Dendritic cell treated with granulocyte-macrophage colony-stimulating factor and Interleukin-4, amounts not matched to agents 40 ng/mL and 50 ng/mL, for 4 days (primary cell): ENCODE measurements at regions of chr6 and their contacts with region 1.

Region 1: DNA sequence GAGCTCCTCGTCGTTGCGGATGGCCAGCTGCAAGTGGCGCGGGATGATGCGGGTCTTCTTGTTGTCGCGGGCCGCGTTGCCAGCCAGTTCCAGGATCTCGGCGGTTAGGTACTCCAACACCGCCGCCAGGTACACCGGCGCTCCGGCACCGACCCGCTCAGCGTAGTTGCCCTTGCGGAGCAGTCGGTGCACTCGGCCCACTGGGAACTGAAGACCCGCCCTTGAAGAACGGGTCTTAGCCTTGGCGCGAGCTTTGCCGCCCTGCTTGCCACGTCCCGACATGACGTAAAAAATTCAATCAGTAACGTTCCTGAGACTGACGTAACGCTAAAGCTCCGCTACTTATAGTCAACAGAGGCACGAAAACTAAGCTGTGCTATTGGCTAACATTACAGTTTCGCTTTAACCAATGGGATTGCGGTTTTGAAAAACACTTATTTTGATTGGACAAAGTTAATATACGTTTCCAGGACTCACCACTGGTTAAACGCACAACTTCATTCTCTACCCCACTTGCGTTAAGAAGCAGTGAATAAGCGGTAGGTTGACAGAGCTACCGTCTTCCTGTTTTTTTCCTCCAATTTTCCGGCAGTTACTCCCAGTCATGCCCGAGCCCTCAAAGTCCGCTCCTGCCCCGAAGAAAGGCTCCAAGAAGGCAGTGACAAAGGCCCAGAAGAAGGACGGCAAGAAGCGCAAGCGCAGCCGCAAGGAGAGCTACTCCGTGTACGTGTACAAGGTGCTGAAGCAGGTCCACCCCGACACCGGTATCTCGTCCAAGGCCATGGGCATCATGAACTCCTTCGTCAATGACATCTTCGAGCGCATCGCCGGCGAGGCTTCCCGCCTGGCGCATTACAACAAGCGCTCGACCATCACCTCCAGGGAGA is 73.9 kb downstream of the OR2B2 start:
- H3K4me3 Mint-ChIP-seq: no peak overlapping the region
- H3K27ac Mint-ChIP-seq: no peak overlapping the region
- H3K4me1 Mint-ChIP-seq: peaks cover 12% of the 10 kb centered on the region
- H3K27me3 Mint-ChIP-seq: no peaks in the 10 kb centered on the region

Region 2: GRCh38 chr6:27650620-27651370 is 187.5 kb before region 1 on chr6:
- intact Hi-C with region 1: no loop called
- H3K4me3 Mint-ChIP-seq: no peak overlapping the region
- H3K27ac Mint-ChIP-seq: no peak overlapping the region
- H3K4me1 Mint-ChIP-seq: no peaks in the 10 kb centered on the region
- H3K27me3 Mint-ChIP-seq: peaks cover 58% of the 10 kb centered on the region

Region 3: DNA sequence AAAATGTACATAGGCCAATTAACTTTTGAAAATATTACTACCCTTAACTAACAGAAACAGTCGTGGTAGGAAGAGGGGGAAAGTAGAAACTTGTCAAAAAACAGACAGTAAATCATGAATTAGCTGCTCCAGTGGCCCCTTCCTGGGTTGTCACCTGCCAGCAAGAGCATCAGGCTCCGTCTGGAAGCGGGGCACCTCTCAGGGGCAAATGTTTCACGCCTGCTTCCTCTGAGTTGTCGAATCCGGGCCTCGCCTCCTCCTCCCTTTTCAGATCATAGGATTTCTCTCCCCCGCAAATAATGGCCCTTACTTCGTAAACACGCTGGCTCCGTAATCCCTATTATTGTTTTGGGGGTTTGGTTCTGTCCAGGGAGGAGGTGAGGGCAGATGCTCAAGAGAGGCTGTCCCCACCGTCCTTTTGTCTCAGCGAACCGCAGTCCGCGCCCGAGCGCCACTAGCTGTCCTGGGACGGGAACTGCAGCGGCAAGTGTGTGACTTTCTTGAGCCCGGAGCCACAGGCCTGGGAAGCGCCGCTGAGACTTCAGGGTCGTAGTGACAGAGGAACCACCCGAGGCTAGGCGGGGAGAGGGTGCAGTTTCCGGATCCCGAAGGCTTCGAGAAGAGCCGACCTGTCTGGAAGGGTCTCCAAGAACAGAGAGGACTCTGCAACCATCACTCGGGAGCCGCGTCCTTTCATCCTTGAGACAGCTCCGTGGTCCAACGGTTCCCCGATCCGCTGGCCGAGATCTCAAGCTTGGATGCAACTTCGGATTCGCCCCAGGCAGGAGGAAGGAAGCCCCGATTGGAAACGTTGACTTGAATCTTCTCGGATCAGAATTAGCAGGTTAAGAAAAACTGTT is 150.9 kb before region 1 on chr6:
- intact Hi-C with region 1: no loop called
- H3K4me3 Mint-ChIP-seq: peak overlapping the region; percentile 78
- H3K27ac Mint-ChIP-seq: no peak overlapping the region
- H3K4me1 Mint-ChIP-seq: peaks cover 11% of the 10 kb centered on the region
- H3K27me3 Mint-ChIP-seq: peaks cover 65% of the 10 kb centered on the region

Region 4: DNA sequence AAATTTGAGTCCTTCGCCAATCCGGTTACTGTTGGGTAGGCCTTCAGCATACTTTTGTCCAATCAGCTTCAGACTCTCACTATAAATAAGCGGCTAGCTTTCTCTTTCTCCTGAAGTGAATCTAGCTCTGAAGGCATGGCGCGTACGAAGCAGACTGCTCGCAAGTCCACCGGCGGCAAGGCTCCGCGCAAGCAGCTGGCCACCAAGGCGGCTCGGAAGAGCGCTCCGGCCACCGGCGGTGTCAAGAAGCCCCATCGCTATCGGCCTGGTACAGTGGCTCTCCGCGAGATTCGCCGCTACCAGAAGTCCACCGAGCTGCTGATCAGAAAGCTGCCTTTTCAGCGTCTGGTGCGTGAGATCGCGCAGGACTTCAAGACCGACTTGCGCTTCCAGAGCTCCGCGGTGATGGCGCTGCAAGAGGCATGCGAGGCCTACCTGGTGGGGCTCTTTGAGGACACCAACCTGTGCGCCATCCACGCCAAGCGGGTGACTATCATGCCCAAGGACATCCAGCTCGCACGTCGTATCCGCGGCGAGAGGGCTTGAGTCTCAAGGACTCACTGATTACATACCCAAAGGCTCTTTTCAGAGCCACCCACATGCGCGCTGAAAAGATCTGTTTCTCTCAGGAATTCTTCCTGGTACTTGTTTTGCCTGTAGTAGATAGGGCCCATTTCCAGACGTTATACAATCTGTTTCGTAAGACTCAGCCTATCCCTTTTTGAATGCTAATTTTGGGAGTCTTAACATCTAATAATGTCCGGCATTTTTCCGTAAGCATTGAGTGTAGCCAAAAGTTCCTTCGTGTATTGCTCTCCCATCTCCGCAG is 28.1 kb before region 1 on chr6:
- intact Hi-C with region 1: loop called (anchors 1 kb)
- H3K4me3 Mint-ChIP-seq: peak overlapping the region; percentile 81
- H3K27ac Mint-ChIP-seq: peak overlapping the region; percentile 95
- H3K4me1 Mint-ChIP-seq: peaks cover 27% of the 10 kb centered on the region
- H3K27me3 Mint-ChIP-seq: peaks cover 2% of the 10 kb centered on the region

Region 5: DNA sequence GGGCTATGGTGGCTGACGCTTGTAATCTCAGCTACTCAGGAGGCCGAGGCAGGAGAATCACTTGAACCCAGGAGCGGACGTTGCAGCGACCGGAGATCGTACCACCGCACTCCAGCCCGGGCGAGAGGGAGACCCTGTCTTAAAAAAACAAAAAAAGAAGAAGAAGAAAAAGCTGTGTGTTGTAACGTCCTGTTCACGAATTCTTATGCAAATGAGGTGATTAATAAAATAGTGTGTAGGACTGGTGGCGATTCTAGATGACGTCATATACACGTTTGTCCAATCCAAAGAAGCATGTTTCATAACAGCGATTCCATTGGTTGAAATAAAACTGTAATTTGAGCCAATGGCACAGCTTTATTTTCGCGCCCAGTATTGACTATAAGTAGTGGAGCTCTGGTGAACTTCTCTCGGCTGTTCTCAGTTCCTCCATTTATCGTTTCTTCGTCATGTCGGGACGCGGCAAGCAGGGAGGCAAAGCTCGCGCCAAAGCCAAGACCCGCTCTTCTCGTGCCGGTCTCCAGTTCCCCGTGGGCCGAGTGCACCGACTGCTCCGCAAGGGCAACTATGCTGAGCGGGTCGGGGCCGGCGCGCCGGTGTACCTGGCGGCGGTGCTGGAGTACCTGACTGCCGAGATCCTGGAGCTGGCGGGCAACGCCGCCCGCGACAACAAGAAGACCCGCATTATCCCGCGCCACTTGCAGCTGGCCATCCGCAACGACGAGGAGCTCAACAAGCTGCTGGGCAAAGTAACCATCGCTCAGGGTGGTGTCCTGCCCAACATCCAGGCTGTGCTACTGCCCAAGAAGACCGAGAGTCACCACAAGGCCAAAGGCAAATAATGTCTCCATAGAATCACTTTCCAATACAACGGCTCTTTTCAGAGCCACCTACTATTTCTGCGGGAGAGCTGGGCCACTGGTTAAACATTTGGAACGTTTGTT is 26.9 kb after region 1 on chr6:
- intact Hi-C with region 1: loop called (anchors 1 kb)
- H3K4me3 Mint-ChIP-seq: peak overlapping the region; percentile 89
- H3K27ac Mint-ChIP-seq: peak overlapping the region; percentile 98
- H3K4me1 Mint-ChIP-seq: peaks cover 53% of the 10 kb centered on the region
- H3K27me3 Mint-ChIP-seq: peaks cover 12% of the 10 kb centered on the region

Region 6: GRCh38 chr6:27871924-27872638 is 33.8 kb after region 1 on chr6:
- intact Hi-C with region 1: loop called (anchors 1 kb)
- H3K4me3 Mint-ChIP-seq: peak overlapping the region; percentile 87
- H3K27ac Mint-ChIP-seq: peak overlapping the region; percentile 99
- H3K4me1 Mint-ChIP-seq: peaks cover 28% of the 10 kb centered on the region
- H3K27me3 Mint-ChIP-seq: peaks cover 7% of the 10 kb centered on the region